AG04450 (cell line): ENCODE measurements at regions of chr12 and their contacts with region 1.

Region 1: DNA sequence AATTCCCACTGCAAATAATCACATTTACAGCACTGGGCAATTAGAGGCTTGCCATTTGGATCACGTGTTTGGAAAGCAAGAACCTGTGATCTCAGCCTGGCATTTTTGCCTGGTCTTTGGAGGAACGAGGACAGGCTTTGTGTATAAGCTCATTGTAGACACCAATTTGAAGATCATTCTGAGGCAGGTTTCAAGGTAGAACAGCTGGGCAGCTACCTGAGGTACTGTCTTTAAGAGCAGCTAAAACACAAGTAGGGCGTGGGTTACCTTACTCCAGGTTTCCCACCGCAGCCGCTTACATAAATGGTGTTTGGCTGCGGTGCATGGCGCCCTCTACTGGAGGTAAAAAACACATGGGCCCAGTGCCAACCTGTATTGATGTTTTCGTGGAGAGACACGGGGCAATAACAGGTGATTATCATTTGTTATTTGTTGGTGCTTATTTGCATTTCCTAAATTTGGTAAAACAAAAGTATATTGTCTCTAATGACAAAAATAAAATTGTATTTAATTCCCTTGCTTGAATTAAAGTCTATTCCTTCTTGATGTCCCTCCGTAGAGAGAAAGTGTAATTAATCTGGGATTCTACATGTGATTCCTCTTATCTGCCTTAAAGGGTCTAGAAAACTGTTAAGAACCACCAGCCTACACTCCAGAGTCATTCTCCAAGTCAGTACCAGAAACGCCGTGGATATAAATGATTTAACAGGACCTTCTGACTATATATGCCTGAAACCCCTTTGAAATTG is 69.7 kb downstream of the SVOP start:
- DNase-seq: peak; percentile 13
- H3K4me3 ChIP-seq: no peak overlapping the region
- H3K27ac ChIP-seq: no peak overlapping the region
- H3K27me3 ChIP-seq: peaks cover 2% of the 10 kb centered on the region
- CTCF ChIP-seq: peak; percentile 84

Region 2: GRCh38 chr12:108562348-108563135 is 388.6 kb before region 1 on chr12 and contains the start of gene ISCU:
- CTCF ChIA-PET with region 1: interaction called, 17 read pairs
- POLR2A ChIA-PET with region 1: no interaction called
- DNase-seq: peak; percentile 94
- H3K4me3 ChIP-seq: peak within 1 kb of the TSS; percentile 100
- H3K27ac ChIP-seq: peak within 1 kb of the TSS; percentile 87
- H3K27me3 ChIP-seq: no peaks in the 10 kb centered on the region
- CTCF ChIP-seq: no peak
- polyA plus RNA-seq, gene ISCU: 164 and 184 TPM in 2 replicates

Region 3: GRCh38 chr12:108570743-108571608 is 380.2 kb before region 1 on chr12:
- CTCF ChIA-PET with region 1: interaction called, 10 read pairs
- POLR2A ChIA-PET with region 1: no interaction called
- DNase-seq: no peak
- H3K4me3 ChIP-seq: no peak overlapping the region
- H3K27ac ChIP-seq: peak overlapping the region; percentile 21
- H3K27me3 ChIP-seq: no peaks in the 10 kb centered on the region
- CTCF ChIP-seq: peak; percentile 59

Region 4: DNA sequence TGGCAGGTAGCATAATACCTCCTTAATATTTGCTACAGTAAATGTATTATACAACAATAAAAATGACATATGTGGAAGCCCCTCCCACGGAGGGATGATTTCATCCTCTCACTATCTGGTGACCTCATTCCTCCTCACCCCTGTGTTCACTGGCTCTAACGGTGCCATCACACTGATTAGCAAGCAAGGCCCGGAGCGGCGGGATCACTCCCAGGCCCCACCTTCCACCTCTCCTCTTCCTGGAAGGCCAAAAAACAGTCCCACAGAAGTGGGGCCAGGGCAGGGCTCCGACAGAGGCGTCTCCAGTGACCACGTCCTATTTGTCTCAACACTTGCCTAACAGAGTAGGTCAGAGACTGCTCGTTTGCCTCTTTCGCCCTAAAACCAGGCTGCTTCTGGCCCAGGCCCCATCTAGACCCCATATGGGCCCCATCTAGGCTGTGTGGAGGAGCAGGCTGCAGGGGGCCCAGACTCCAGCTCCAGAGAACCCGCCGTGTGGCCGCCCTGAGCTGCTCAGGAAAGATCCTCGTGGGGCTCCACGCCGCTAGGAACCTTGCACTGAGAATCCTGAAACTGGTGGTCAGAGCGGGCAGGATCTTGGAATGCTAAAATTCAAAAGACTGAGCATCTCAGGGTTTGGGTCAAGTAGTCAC is 321.2 kb before region 1 on chr12:
- CTCF ChIA-PET with region 1: no interaction called
- POLR2A ChIA-PET with region 1: no interaction called
- DNase-seq: no peak
- H3K4me3 ChIP-seq: no peak overlapping the region
- H3K27ac ChIP-seq: peak overlapping the region; percentile 91
- H3K27me3 ChIP-seq: no peaks in the 10 kb centered on the region
- CTCF ChIP-seq: no peak

Region 5: GRCh38 chr12:108850854-108851573 is 100.2 kb before region 1 on chr12:
- CTCF ChIA-PET with region 1: interaction called, 11 read pairs
- POLR2A ChIA-PET with region 1: no interaction called
- DNase-seq: no peak
- H3K4me3 ChIP-seq: no peak overlapping the region
- H3K27ac ChIP-seq: peak overlapping the region; percentile 49
- H3K27me3 ChIP-seq: no peaks in the 10 kb centered on the region
- CTCF ChIP-seq: peak; percentile 21; the same call in 1 of the 2 replicates

Region 6: GRCh38 chr12:108939594-108939993 is 11.6 kb before region 1 on chr12:
- CTCF ChIA-PET with region 1: interaction called, 12 read pairs
- POLR2A ChIA-PET with region 1: no interaction called
- DNase-seq: no peak
- H3K4me3 ChIP-seq: no peak overlapping the region
- H3K27ac ChIP-seq: no peak overlapping the region
- H3K27me3 ChIP-seq: peaks cover 12% of the 10 kb centered on the region
- CTCF ChIP-seq: no peak